ENCODE measurements at regions of chr9 and their contacts with region 1.

Region 1: GRCh38 chr9:875119-875962 is 33.8 kb downstream of the DMRT1 start:
- DNase-seq: no peak
- ATAC-seq: no peak
- H3K4me3 ChIP-seq: no peak overlapping the region
- H3K4me3 Mint-ChIP-seq: no peak overlapping the region
- H3K27ac ChIP-seq: no peak overlapping the region
- H3K27ac Mint-ChIP-seq: no peak overlapping the region
- H3K4me1 ChIP-seq: no peaks in the 10 kb centered on the region
- H3K4me1 Mint-ChIP-seq: peaks cover 0 to 2% (median 0%) of the 10 kb centered on the region in 7 donors
- H3K27me3 ChIP-seq: no peaks in the 10 kb centered on the region
- H3K27me3 Mint-ChIP-seq: peaks cover 10 to 34% (median 26%) of the 10 kb centered on the region in 5 donors

Region 2: GRCh38 chr9:306887-307286 is 568.5 kb before region 1 on chr9:
- CTCF ChIA-PET with region 1: no interaction called
- POLR2A ChIA-PET with region 1: no interaction called
- intact Hi-C with region 1: no loop called
- DNase-seq: peak; percentile 12 to 65 (median 52)
- ATAC-seq: peak; percentile 94
- H3K4me3 ChIP-seq: no peak overlapping the region
- H3K4me3 Mint-ChIP-seq: no peak overlapping the region
- H3K27ac ChIP-seq: no peak overlapping the region
- H3K27ac Mint-ChIP-seq: peak overlapping the region in 6 of 9 donors; percentile 3 to 69 (median 43)
- H3K4me1 ChIP-seq: no peaks in the 10 kb centered on the region
- H3K4me1 Mint-ChIP-seq: peaks cover 0 to 16% (median 7%) of the 10 kb centered on the region in 7 donors
- H3K27me3 ChIP-seq: no peaks in the 10 kb centered on the region
- H3K27me3 Mint-ChIP-seq: no peaks in the 10 kb centered on the region

Region 3: DNA sequence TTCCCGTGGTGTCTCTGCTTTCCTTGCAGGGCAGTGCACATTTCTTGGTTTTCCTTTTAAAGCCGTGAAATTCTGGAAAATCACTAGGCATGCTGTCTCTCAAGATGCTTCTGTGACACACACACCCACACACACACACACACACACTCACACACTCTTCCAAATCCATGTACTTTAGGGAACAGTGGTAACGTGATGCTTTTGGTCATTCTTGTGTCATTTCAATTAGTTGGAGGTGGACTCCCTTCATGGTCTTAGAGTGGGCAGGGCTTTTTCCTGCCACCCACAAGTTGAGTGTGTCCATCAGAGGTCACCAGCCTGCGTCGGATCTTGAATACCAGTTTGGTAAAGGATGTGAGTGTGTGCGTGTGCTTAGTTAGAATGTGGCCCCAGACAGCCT is 30.6 kb after region 1 on chr9:
- CTCF ChIA-PET with region 1: no interaction called
- POLR2A ChIA-PET with region 1: no interaction called
- intact Hi-C with region 1: loop called in 1 of 2 experiments (anchors 2 kb)
- DNase-seq: no peak
- ATAC-seq: no peak
- H3K4me3 ChIP-seq: no peak overlapping the region
- H3K4me3 Mint-ChIP-seq: no peak overlapping the region
- H3K27ac ChIP-seq: no peak overlapping the region
- H3K27ac Mint-ChIP-seq: no peak overlapping the region
- H3K4me1 ChIP-seq: no peaks in the 10 kb centered on the region
- H3K4me1 Mint-ChIP-seq: peaks cover 0 to 2% (median 0%) of the 10 kb centered on the region in 7 donors
- H3K27me3 ChIP-seq: no peaks in the 10 kb centered on the region
- H3K27me3 Mint-ChIP-seq: peaks cover 30 to 75% (median 53%) of the 10 kb centered on the region in 5 donors

Region 4: DNA sequence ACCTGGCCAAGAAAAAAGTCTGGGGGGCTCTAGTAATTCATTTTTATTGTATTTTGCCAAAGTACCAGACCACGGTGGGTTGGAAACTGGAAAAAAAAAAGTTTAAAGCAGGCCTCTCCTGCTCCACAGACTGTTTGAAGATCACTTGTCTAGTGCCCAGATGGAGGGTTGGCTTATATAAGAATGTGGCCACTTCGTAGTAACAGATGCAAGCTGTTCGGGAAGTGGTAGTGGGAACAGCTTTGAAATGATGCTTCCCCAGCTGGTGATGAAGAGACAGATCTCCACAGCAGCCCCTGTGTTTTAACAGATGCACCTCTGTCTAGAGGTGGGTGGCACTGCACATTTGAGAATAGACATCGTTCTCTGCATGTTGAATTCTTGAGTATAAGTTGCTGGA is 46.8 kb after region 1 on chr9:
- CTCF ChIA-PET with region 1: no interaction called
- POLR2A ChIA-PET with region 1: no interaction called
- intact Hi-C with region 1: no loop called
- DNase-seq: no peak
- ATAC-seq: no peak
- H3K4me3 ChIP-seq: no peak overlapping the region
- H3K4me3 Mint-ChIP-seq: no peak overlapping the region
- H3K27ac ChIP-seq: no peak overlapping the region
- H3K27ac Mint-ChIP-seq: no peak overlapping the region
- H3K4me1 ChIP-seq: no peaks in the 10 kb centered on the region
- H3K4me1 Mint-ChIP-seq: no peaks in the 10 kb centered on the region
- H3K27me3 ChIP-seq: no peaks in the 10 kb centered on the region
- H3K27me3 Mint-ChIP-seq: peaks cover 7 to 18% (median 8%) of the 10 kb centered on the region in 5 donors

Region 5: DNA sequence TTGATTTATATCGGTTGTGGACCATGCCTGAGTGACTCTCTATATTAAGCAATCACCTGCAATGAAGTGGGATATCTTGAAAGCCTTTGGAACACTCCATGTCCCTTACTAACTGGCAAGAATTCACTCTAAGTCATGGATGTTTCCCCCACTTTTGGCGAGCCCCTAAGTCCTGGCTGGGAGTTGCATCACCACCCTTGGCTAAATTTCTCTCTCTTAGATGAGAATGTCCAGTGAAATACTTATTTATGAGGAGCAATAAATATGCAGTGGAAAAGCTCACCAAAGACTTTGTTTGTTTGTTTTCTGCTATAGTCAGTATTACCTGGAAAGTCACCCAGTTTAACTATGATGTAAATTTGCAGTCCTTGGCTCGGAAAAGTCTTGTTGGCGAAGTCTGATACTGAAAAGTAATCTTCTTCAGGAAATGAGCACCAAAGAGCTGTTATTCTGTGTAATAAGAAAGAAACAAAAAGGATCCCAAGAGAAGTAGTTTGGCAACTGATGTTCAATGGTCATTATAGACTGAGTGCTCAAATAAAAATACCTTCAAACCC is 508.6 kb after region 1 on chr9:
- CTCF ChIA-PET with region 1: no interaction called
- POLR2A ChIA-PET with region 1: no interaction called
- intact Hi-C with region 1: no loop called
- DNase-seq: no peak
- ATAC-seq: no peak
- H3K4me3 ChIP-seq: no peak overlapping the region
- H3K4me3 Mint-ChIP-seq: no peak overlapping the region
- H3K27ac ChIP-seq: no peak overlapping the region
- H3K27ac Mint-ChIP-seq: no peak overlapping the region
- H3K4me1 ChIP-seq: no peaks in the 10 kb centered on the region
- H3K4me1 Mint-ChIP-seq: no peaks in the 10 kb centered on the region
- H3K27me3 ChIP-seq: peaks cover 0 to 3% of the 10 kb centered on the region in 2 donors
- H3K27me3 Mint-ChIP-seq: peaks cover 0 to 6% (median 0%) of the 10 kb centered on the region in 5 donors

Measured in naive thymus-derived CD4-positive, alpha-beta T cell (primary cell).